PC-9 (cell line): ENCODE measurements at regions of chr11 and their contacts with region 1.

Region 1: GRCh38 chr11:46238967-46239800 is 38.3 kb upstream of the CREB3L1 start:
- DNase-seq: peak; percentile 69 to 90
- H3K4me3 ChIP-seq: peak overlapping the region; percentile 72
- H3K27ac ChIP-seq: no peak overlapping the region
- H3K4me1 ChIP-seq: peaks cover 47% of the 10 kb centered on the region
- H3K27me3 ChIP-seq: no peaks in the 10 kb centered on the region
- CTCF ChIP-seq: peak; percentile 98

Region 2: GRCh38 chr11:45964911-45965389 is 274.2 kb before region 1 on chr11:
- CTCF ChIA-PET with region 1: no interaction called
- POLR2A ChIA-PET with region 1: no interaction called
- intact Hi-C with region 1: loop called (anchors 2 kb)
- DNase-seq: peak; percentile 54 to 62
- H3K4me3 ChIP-seq: no peak overlapping the region
- H3K27ac ChIP-seq: no peak overlapping the region
- H3K4me1 ChIP-seq: no peaks in the 10 kb centered on the region
- H3K27me3 ChIP-seq: no peaks in the 10 kb centered on the region
- CTCF ChIP-seq: peak; percentile 96

Region 3: DNA sequence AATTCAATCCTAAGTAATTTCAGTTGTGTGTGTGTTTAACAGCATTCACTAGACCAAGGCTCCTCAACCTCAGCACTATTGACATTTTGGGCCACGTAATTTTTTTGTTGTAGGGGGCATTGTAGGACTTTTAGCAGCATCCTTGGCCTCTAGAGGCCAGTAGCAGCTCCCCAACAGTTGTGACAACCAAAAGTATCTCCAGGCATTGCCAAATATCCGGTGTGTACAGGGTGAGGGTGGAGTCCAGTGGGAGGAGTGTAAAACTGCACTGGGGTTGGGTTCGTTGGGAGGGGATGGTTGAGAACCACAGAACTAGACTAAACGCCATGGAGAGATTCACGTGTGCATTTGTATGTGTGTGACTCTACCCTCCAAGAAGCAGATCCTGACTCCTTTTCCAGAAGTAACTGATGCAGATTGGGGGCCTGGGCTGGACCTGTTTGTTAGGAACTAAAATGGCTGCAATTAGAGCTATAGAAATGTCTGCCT is 112.0 kb before region 1 on chr11:
- CTCF ChIA-PET with region 1: interaction called, 8 read pairs
- POLR2A ChIA-PET with region 1: no interaction called
- intact Hi-C with region 1: loop called (anchors 1 kb)
- DNase-seq: peak; percentile 67 to 81
- H3K4me3 ChIP-seq: no peak overlapping the region
- H3K27ac ChIP-seq: no peak overlapping the region
- H3K4me1 ChIP-seq: peaks cover 26% of the 10 kb centered on the region
- H3K27me3 ChIP-seq: no peaks in the 10 kb centered on the region
- CTCF ChIP-seq: peak; percentile 66

Region 4: DNA sequence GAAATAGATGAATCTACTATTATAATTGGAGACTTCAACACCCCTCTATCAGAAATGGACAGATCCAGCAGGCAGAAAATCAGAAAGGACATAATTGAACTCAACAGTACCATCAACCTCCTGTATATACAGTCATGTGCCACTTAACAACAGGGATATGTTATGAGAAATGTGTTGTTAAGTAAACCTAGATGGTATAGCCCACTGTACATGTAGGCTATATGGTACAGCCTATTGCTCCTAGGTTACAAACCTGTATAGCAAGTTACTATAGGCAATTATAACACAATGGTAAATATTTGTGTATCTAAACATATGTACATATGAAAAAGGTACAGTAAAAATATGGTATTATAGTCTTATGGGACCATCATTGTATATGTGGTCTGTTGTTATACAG is 51.1 kb before region 1 on chr11:
- CTCF ChIA-PET with region 1: no interaction called
- POLR2A ChIA-PET with region 1: no interaction called
- intact Hi-C with region 1: no loop called
- DNase-seq: no peak
- H3K4me3 ChIP-seq: no peak overlapping the region
- H3K27ac ChIP-seq: no peak overlapping the region
- H3K4me1 ChIP-seq: peaks cover 22% of the 10 kb centered on the region
- H3K27me3 ChIP-seq: no peaks in the 10 kb centered on the region
- CTCF ChIP-seq: no peak

Region 5: DNA sequence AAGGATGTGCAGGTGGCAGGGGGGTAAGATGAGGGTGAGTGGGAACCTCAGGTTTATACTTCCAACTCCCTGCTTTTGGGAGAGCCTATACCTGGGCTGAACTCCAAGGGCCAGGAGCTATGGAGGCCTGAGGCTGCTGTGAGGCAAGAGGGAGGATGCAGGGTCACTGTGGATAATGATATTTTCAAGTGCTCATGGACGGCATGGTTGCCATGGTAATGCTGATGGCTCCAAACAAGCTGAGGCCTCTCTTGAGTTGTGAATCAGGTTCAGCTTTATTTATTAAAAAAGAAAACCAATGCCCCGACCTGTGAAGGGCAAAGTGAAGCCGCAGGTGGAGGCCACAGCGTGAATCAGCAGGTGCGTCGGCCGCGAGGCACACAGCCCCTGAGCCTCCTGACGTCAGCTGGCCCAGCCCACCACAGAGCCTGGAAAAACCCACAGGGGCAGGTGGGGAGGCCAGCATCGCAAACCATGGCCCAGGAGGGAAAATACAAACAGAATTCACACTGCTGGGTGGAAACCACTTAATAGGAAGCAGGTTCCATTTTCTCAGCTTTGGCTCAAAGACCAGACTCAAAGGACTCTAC is 20.9 kb after region 1 on chr11:
- CTCF ChIA-PET with region 1: no interaction called
- POLR2A ChIA-PET with region 1: no interaction called
- intact Hi-C with region 1: no loop called
- DNase-seq: no peak
- H3K4me3 ChIP-seq: no peak overlapping the region
- H3K27ac ChIP-seq: no peak overlapping the region
- H3K4me1 ChIP-seq: no peaks in the 10 kb centered on the region
- H3K27me3 ChIP-seq: no peaks in the 10 kb centered on the region
- CTCF ChIP-seq: no peak

Region 6: DNA sequence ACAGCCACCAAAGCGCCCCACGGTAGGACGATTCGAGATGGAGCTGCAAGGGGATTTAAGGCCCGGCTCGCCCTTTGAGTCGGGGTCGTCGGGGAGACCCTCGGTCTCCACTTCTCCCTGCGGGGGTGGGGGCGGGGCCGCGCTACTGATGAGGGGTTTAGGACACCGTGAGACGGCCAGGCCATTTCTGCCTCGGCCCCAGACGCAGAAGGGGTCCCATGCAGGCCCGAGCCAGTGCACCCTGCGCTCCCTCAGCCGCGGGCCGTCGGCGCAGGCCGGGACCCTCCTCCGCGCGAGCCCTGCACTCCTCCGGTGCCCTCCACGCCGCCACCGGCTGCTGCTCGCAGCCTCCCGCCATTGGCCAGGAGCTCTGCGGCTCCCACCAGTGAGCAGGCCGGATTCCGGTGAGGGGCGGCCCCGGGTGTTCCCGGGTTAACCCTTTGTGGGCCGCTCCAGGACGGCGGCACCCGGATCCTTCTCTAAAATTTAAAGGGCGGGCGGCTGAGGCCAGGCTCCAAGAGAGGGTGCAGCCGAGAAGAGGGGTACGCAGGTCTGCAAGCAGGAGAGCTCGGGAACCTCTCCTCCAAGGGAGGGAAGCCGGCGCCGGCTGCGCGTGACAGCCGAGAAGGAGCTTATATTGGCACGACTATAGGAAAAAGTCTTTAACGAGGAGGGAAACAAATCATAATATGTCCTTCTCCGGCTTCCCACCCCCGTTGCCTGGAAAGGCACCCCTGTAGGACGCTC is 56.3 kb after region 1 on chr11:
- CTCF ChIA-PET with region 1: interaction called, 5 read pairs
- POLR2A ChIA-PET with region 1: interaction called, 19 read pairs
- intact Hi-C with region 1: loop called (anchors 2 kb)
- DNase-seq: peak; percentile 68 to 82
- H3K4me3 ChIP-seq: peak overlapping the region; percentile 73
- H3K27ac ChIP-seq: peak overlapping the region; percentile 70
- H3K4me1 ChIP-seq: peaks cover 68% of the 10 kb centered on the region
- H3K27me3 ChIP-seq: no peaks in the 10 kb centered on the region
- CTCF ChIP-seq: no peak

Region 7: GRCh38 chr11:46361283-46362155 is 122.3 kb after region 1 on chr11:
- CTCF ChIA-PET with region 1: interaction called, 3 read pairs
- POLR2A ChIA-PET with region 1: no interaction called
- intact Hi-C with region 1: loop called (anchors 2 kb)
- DNase-seq: no peak
- H3K4me3 ChIP-seq: no peak overlapping the region
- H3K27ac ChIP-seq: no peak overlapping the region
- H3K4me1 ChIP-seq: peaks cover 22% of the 10 kb centered on the region
- H3K27me3 ChIP-seq: no peaks in the 10 kb centered on the region
- CTCF ChIP-seq: no peak

Region 8: DNA sequence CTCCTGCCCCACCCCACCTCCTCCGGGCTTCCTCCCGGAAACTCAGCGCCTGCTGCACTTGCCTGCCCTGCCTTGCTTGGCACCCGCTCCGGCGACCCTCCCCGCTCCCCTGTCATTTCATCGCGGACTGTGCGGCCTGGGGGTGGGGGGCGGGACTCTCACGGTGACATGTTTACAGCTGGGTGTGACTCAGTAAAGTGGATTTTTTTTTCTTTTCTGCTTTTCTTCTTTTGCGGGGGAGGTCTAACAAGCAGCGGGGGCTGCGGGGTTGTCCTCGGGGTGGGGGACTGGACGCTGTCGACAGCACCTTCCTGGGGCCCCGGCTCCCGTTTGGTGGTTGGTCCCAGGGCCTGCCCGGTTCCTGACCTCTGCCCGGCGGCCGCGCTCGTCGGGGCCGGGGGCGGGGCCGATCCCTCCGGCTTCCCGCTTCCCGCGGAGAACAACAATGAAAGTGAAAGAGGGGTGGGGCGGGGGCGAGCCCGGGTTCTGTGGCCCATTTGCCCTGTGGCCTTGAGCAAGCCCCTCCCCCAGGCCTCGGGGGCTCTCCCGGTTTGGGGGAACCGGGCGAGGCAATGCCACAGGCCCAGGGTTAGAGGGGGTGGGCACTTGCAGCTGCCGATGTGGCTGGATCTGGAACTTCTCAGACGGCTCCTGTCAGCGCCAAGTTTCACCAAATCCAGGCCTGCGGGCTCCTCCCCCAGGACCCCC is 141.3 kb after region 1 on chr11:
- CTCF ChIA-PET with region 1: interaction called, 12 read pairs
- POLR2A ChIA-PET with region 1: no interaction called
- intact Hi-C with region 1: loop called (anchors 5 kb)
- DNase-seq: peak; percentile 33 to 80
- H3K4me3 ChIP-seq: peak overlapping the region; percentile 73
- H3K27ac ChIP-seq: peak overlapping the region; percentile 5; the same call in 1 of the 2 replicates
- H3K4me1 ChIP-seq: peaks cover 21% of the 10 kb centered on the region
- H3K27me3 ChIP-seq: no peaks in the 10 kb centered on the region
- CTCF ChIP-seq: no peak

Region 9: DNA sequence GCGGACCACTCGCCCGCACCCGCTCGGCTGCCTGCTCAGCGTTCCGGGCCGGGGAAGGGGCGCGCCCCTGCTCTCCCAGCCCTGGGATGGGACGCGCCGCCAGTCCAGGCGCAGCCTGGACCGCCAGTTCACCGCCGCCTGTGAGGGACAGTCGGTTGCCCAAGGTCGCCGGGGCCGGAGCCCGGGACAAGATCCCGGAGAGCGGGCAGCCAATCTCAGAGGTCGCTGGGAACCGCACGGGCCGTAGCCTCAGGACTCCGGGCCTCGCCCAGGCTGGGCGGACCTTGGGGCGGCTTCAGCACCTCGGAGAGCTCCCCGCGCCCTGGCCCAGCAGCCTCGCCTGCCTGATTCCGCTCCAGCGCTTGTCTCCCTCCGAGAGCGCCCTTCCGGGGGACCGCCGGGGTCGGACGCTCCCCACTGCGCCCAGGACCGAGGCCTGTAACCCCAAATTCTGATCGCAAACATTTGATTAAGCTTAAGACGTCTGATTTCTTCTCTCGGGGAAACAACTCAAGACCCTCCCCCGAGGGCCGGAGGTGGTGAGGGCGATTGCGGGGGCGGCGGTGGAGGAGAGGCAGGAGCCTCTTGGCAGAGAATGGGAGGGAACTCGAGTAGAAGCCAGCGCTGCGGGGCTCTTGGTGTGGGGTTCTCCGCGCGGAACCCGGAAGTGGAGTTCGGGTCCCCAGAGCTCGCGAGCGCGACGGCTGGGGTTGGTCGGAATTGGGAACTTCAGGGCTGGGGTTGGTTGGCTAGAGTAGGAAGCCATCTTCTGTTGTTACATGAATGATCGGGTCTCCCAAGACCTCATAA is 153.4 kb after region 1 on chr11:
- CTCF ChIA-PET with region 1: no interaction called
- POLR2A ChIA-PET with region 1: no interaction called
- intact Hi-C with region 1: no loop called
- DNase-seq: peak; percentile 66 to 86
- H3K4me3 ChIP-seq: no peak overlapping the region
- H3K27ac ChIP-seq: no peak overlapping the region
- H3K4me1 ChIP-seq: 0 out of 2 replicates have a peak, but pooled peaks cover 4% of the 10 kb centered on the region
- H3K27me3 ChIP-seq: peaks cover 22% of the 10 kb centered on the region
- CTCF ChIP-seq: no peak